Calu3 (cell line): ENCODE measurements at regions of chr6 and their contacts with region 1.

Region 1: GRCh38 chr6:20126789-20127653 is 85.2 kb downstream of the MBOAT1 start:
- DNase-seq: peak; percentile 92
- H3K4me3 Mint-ChIP-seq: no peak overlapping the region
- H3K27ac Mint-ChIP-seq: peak overlapping the region; percentile 46
- H3K4me1 Mint-ChIP-seq: peaks cover 31% of the 10 kb centered on the region
- H3K27me3 Mint-ChIP-seq: no peaks in the 10 kb centered on the region
- CTCF ChIP-seq: peak; percentile 98

Region 2: DNA sequence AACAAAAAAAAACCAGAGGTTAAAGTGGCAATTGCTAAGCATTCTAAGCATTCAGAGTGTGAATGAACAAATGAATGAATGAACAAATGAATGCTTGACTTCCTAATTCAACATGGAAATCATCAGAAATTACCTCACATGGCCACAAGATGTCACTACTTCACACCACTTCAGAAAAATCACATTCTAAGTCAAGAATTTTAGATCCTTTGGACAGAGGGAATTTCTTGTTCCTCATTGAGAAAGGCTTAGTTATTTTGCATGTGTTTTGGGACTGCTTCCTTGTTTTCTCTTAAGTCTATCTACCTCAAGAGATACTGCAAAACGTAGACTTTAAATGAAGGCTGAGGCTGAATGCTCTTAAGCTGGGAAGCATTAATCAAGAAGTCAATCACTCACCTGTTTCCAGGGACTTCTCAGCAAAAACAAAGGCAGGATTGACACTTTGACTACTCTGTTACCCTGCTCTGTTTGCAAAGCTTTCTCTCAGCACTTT is 34.9 kb before region 1 on chr6:
- CTCF ChIA-PET with region 1: interaction called, 29 read pairs
- intact Hi-C with region 1: loop called (anchors 1 kb)
- DNase-seq: peak; percentile 34
- H3K4me3 Mint-ChIP-seq: no peak overlapping the region
- H3K27ac Mint-ChIP-seq: no peak overlapping the region
- H3K4me1 Mint-ChIP-seq: no peaks in the 10 kb centered on the region
- H3K27me3 Mint-ChIP-seq: no peaks in the 10 kb centered on the region
- CTCF ChIP-seq: peak; percentile 87

Region 3: DNA sequence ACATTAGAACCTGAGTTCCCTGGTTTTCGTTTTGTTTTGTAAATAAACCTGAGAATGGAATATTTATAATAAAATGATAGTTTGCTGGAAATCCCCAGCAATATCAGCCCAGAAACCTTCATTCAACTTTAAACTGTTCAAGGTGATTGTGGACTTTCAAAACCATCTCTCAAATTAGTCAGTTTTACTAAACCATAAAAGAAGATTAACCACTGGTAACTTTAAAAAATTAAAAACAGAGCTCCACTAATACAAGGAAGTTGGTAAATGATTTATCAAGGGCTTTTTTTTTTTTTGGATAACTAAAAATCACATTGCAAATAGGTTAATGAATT is 75.3 kb after region 1 on chr6:
- CTCF ChIA-PET with region 1: interaction called, 14 read pairs
- intact Hi-C with region 1: loop called (anchors 2 kb)
- DNase-seq: no peak
- H3K4me3 Mint-ChIP-seq: peak overlapping the region; percentile 69
- H3K27ac Mint-ChIP-seq: peak overlapping the region; percentile 95
- H3K4me1 Mint-ChIP-seq: peaks cover 66% of the 10 kb centered on the region
- H3K27me3 Mint-ChIP-seq: no peaks in the 10 kb centered on the region
- CTCF ChIP-seq: no peak

Region 4: DNA sequence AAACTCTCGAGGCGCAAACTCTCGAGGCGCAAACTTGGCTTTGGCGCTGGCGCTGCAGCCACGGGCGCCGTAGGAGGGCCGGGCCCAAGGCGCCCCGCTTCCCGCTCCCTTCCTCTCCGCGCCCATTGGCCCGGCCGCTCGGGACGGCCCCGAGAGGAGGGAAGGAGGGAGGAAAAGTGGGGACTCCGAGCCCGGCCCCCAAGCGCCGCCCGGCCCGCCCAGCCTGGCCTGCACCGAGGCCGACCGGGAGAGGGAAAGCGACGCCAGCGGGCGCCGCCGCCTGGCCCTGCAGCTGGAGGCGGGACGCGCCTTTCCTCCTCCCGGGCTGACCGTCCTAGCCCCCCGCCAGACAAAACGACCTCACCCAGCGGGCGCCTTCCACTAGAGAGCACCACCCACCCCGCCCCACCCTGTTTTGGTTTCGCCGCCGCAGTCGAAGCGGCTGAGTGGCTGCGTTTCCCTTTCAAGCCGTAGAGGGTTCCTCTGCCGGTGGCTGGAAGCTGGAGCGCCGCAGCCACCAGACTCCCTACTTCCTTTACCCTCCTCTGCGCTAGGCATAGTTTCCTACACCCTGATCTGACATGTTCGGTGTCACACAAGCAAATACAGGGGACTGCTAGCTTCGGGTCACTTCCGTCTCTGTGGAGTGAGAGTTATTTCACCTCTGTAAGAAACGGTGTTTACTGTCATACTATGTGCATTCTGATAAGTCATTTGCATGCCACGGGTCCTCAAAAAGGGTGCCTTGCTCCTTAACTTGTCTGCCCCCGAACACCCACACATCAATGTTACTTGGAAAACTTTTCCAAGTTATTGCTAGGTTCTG is 85.6 kb after region 1 on chr6 and contains the start of gene MBOAT1:
- CTCF ChIA-PET with region 1: interaction called, 27 read pairs
- intact Hi-C with region 1: loop called (anchors 1 kb)
- DNase-seq: peak; percentile 99
- H3K4me3 Mint-ChIP-seq: peak within 1 kb of the TSS; percentile 86
- H3K27ac Mint-ChIP-seq: peak within 1 kb of the TSS; percentile 99
- H3K4me1 Mint-ChIP-seq: peaks cover 45% of the 10 kb centered on the region
- H3K27me3 Mint-ChIP-seq: no peaks in the 10 kb centered on the region
- CTCF ChIP-seq: peak; percentile 42
- total RNA-seq, gene MBOAT1: 39.9 and 47.8 TPM in 2 replicates

Region 5: GRCh38 chr6:20236909-20237600 is 110.0 kb after region 1 on chr6:
- CTCF ChIA-PET with region 1: interaction called, 16 read pairs
- intact Hi-C with region 1: no loop called
- DNase-seq: peak; percentile 46
- H3K4me3 Mint-ChIP-seq: peak overlapping the region; percentile 13
- H3K27ac Mint-ChIP-seq: peak overlapping the region; percentile 87
- H3K4me1 Mint-ChIP-seq: peaks cover 38% of the 10 kb centered on the region
- H3K27me3 Mint-ChIP-seq: no peaks in the 10 kb centered on the region
- CTCF ChIP-seq: no peak

Region 6: GRCh38 chr6:20266851-20267608 is 140.0 kb after region 1 on chr6:
- CTCF ChIA-PET with region 1: interaction called, 3 read pairs
- intact Hi-C with region 1: loop called (anchors 5 kb)
- DNase-seq: peak; percentile 80
- H3K4me3 Mint-ChIP-seq: peak overlapping the region; percentile 0
- H3K27ac Mint-ChIP-seq: peak overlapping the region; percentile 68
- H3K4me1 Mint-ChIP-seq: peaks cover 35% of the 10 kb centered on the region
- H3K27me3 Mint-ChIP-seq: no peaks in the 10 kb centered on the region
- CTCF ChIP-seq: peak; percentile 29

Region 7: DNA sequence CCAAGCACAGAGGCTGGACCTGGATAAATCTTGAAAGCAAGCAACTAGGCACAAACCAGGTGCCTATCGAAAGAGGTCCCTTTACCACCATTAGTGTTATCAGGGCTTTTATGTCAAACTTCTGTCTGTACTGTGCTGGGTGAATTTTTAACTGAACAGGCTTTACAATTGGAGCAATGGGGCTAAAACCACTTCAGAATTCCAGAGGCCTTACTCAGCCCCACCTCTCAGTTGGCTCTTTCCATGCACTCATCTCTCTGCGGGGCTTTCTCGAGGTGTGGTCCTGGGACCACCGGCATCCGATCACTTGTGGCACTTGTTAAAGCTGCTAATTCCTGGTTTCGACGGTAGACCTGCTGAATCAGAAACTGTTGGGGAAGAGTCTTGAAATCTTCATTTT is 1699.0 kb after region 1 on chr6:
- CTCF ChIA-PET with region 1: interaction called, 12 read pairs
- intact Hi-C with region 1: no loop called
- DNase-seq: peak; percentile 62
- H3K4me3 Mint-ChIP-seq: peak overlapping the region; percentile 44
- H3K27ac Mint-ChIP-seq: peak overlapping the region; percentile 74
- H3K4me1 Mint-ChIP-seq: peaks cover 47% of the 10 kb centered on the region
- H3K27me3 Mint-ChIP-seq: no peaks in the 10 kb centered on the region
- CTCF ChIP-seq: no peak

Region 8: GRCh38 chr6:22119500-22119899 is 1992.5 kb after region 1 on chr6:
- CTCF ChIA-PET with region 1: no interaction called
- intact Hi-C with region 1: no loop called
- DNase-seq: no peak
- H3K4me3 Mint-ChIP-seq: no peak overlapping the region
- H3K27ac Mint-ChIP-seq: no peak overlapping the region
- H3K4me1 Mint-ChIP-seq: no peaks in the 10 kb centered on the region
- H3K27me3 Mint-ChIP-seq: no peaks in the 10 kb centered on the region
- CTCF ChIP-seq: no peak